ENCODE measurements at regions of chr2 and their contacts with region 1.

Region 1: DNA sequence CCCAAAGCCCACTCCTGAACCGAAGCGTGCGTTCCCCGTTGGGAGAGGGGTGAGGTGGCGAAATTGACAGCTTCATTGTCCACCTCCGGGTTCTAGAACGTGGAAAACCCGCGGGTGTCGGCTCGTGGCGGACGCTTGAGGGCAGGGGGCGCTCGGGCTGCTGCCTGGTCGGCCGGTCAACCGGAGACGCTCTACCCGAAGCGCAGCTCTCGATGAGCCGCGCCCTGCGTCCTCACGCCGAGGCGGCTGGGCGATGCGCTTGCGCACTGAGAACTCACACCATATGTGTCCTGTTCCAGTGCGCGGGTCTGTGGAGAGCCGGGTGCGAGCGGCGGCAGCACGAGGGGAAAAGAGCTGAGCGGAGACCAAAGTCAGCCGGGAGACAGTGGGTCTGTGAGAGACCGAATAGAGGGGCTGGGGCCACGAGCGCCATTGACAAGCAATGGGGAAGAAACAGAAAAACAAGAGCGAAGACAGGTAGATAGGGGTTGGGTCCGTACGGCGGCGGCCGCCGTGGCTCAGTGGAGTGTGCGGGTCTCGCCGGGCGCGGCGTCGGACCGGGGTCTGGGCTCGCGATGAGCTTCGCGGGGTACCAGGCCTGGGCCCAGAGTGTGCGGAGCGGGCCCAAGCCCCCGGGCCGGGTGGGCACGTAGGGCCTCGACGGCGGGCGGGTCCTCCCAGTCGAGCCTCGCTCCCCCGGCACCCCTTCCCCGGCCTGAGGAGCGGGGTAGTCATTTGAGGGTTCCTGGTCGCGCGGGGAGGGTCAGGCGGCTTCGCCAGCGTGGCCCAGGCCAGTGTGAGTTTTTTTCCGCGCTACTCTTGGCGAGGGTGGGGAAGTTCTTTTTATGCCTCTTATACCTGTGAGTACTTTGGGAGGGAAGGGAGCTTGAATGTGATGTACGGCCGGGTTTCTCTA is at the start of gene EIF5B:
- DNase-seq: peak; percentile 100
- H3K4me3 ChIP-seq: peak within 1 kb of the TSS; percentile 84 to 95 (median 90)
- H3K27ac ChIP-seq: peak within 1 kb of the TSS; percentile 85 to 97 (median 91)
- H3K4me1 ChIP-seq: peaks cover 23 to 85% (median 61%) of the 10 kb centered on the region in 6 donors
- H3K27me3 ChIP-seq: no peaks in the 10 kb centered on the region
- CTCF ChIP-seq: peak in 10 of 11 experiments; percentile 35 to 78 (median 66)
- POLR2A ChIP-seq: peak in 1 of 3 donors; percentile 45
- total RNA-seq, gene EIF5B: 23.8 to 49.5 (median 32.3) TPM

Region 2: DNA sequence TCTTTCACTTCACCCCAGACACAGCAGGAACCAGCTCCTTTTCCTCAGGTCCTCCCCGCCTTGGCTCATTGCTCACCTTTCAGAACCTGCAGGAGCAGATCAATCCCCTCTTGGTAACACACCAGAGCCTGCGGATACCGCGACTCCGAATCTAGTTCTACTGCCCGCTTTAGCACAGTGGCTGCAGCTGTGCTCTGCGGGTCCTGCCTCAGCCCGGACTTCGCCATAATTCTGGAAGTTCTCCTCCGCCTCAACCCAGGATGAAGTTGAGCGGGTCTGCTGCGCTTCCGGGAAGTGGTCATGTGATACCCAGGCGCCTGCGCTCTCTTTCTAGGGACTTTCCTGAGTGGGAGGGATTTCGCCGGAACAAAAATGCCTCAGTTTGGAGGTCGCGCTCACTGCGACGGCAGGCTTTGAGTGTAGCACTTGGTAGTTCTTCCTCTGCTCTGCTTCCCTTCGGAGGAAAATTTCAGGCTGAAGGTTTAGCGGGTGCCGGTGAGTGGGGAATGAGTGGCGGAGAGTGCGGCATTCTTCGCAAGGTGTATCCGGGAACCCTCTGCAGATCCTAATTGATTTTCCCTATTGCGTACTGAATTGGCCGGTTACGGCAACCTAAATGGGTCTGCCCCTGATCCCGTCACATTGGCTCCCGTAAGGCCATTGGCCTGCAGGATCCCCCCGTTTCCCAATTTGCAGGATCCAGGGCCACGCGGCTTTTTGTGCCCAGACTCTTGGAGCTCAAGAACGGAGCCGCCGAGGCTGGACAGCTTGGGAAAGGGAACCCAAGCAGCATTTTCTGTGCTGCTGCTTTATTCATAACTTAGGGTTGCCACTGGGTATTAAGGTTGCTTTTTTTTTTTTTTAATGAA is 156.4 kb before region 1 on chr2 and contains the starts of genes MITD1 and MRPL30:
- intact Hi-C with region 1: loop called (anchors 10 kb)
- DNase-seq: peak; percentile 96
- H3K4me3 ChIP-seq: peak within 1 kb of the TSS; percentile 66 to 90 (median 84)
- H3K27ac ChIP-seq: peak within 1 kb of the TSS; percentile 58 to 90 (median 86)
- H3K4me1 ChIP-seq: peaks cover 33 to 89% (median 65%) of the 10 kb centered on the region in 6 donors
- H3K27me3 ChIP-seq: no peaks in the 10 kb centered on the region
- CTCF ChIP-seq: peak in 1 of 11 experiments; percentile 27
- POLR2A ChIP-seq: peak in 1 of 3 donors; percentile 57
- total RNA-seq, gene MITD1: 30.4 to 66.4 (median 37.1) TPM
- total RNA-seq, gene MRPL30: 17.1 to 26.0 (median 22.4) TPM

Region 3: GRCh38 chr2:99624677-99625076 is 287.3 kb after region 1 on chr2:
- intact Hi-C with region 1: no loop called
- DNase-seq: no peak
- H3K4me3 ChIP-seq: no peak overlapping the region
- H3K27ac ChIP-seq: no peak overlapping the region
- H3K4me1 ChIP-seq: peaks cover 0 to 12% (median 0%) of the 10 kb centered on the region in 6 donors
- H3K27me3 ChIP-seq: no peaks in the 10 kb centered on the region
- CTCF ChIP-seq: no peak
- POLR2A ChIP-seq: no peak

Measured in spleen (tissue), 13 donors.